ENCODE measurements at regions of chr5 and their contacts with region 1.

Region 1: GRCh38 chr5:37989884-37990283 is 150.0 kb upstream of the GDNF start:
- DNase-seq: no peak
- H3K4me3 ChIP-seq: no peak overlapping the region
- H3K27ac ChIP-seq: no peak overlapping the region
- H3K4me1 ChIP-seq: no peaks in the 10 kb centered on the region
- H3K27me3 ChIP-seq: no peaks in the 10 kb centered on the region
- CTCF ChIP-seq: no peak
- POLR2A ChIP-seq: no peak

Region 2: DNA sequence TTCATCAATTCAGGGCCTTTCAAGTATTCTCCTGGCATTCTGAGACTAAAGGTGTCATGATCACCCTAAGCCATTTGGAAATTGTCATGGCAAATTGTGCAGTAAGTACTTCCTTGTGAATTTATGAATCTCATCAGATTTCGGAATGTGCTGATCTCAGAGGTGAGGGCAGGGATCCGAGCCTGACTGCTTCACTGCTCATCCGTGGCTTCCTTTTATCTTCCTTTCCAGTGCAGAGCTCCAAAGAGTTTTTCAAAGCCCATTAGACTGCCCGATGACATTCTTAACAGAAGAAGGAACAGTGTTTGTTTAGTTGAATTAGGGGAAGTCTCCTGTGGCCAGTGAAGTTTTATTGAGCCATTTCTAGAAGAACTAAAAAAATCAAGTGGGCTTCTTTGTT is 32.7 kb after region 1 on chr5:
- intact Hi-C with region 1: loop called (anchors 1 kb)
- DNase-seq: no peak
- H3K4me3 ChIP-seq: no peak overlapping the region
- H3K27ac ChIP-seq: no peak overlapping the region
- H3K4me1 ChIP-seq: no peaks in the 10 kb centered on the region
- H3K27me3 ChIP-seq: no peaks in the 10 kb centered on the region
- CTCF ChIP-seq: no peak
- POLR2A ChIP-seq: no peak

Region 3: GRCh38 chr5:38666668-38667498 is 677.0 kb after region 1 on chr5:
- intact Hi-C with region 1: no loop called
- DNase-seq: no peak
- H3K4me3 ChIP-seq: no peak overlapping the region
- H3K27ac ChIP-seq: no peak overlapping the region
- H3K4me1 ChIP-seq: no peaks in the 10 kb centered on the region
- H3K27me3 ChIP-seq: no peaks in the 10 kb centered on the region
- CTCF ChIP-seq: peak in 2 of 3 donors; percentile 59 to 71
- POLR2A ChIP-seq: no peak

Measured in breast epithelium (tissue), 4 donors.